Caco-2 (cell line): ENCODE measurements at regions of chr2 and their contacts with region 1.

Region 1: DNA sequence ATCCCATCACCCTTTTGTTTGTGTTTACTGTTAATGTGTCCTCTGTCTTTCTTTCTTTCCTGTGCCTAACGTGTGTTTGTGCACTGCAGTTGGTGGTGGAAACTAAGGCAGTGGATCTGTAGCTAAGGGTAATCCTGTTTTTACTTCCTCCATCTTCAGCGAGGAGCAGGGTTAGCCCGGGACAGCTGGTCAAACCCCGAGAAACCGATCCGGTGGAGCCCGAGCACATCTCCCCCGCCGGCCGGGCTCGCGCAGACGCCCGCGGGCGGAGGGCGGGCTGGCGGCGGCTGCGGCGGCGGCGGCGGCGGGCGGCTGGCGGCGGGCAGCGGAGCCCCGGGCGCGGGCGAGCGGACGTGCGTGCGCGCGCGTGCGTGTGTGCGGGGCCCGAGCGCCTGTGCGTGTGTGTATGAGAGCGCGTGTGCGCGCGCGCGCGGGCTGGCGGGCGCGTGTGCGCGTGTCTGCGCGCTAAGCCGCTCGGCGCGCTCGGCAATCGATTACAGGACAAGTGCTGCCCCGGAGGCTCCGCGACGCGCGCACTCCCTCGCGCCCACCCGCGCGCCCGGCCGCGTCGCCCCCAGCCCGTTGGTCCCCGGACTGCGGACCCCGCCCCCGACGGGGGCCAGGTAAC is at the start of gene IKZF2:
- DNase-seq: peak; percentile 86 to 88
- H3K4me3 ChIP-seq: peak within 1 kb of the TSS; percentile 70
- H3K4me3 Mint-ChIP-seq: peak within 1 kb of the TSS; percentile 97
- H3K27ac Mint-ChIP-seq: peak within 1 kb of the TSS; percentile 61
- H3K4me1 ChIP-seq: 0 out of 2 replicates have a peak, but pooled peaks cover 3% of the 10 kb centered on the region
- H3K4me1 Mint-ChIP-seq: peaks cover 19% of the 10 kb centered on the region
- H3K27me3 ChIP-seq: no peaks in the 10 kb centered on the region
- H3K27me3 Mint-ChIP-seq: no peaks in the 10 kb centered on the region
- CTCF ChIP-seq: no peak
- total RNA-seq, gene IKZF2: 13.3 and 14.2 TPM in 2 replicates

Region 2: DNA sequence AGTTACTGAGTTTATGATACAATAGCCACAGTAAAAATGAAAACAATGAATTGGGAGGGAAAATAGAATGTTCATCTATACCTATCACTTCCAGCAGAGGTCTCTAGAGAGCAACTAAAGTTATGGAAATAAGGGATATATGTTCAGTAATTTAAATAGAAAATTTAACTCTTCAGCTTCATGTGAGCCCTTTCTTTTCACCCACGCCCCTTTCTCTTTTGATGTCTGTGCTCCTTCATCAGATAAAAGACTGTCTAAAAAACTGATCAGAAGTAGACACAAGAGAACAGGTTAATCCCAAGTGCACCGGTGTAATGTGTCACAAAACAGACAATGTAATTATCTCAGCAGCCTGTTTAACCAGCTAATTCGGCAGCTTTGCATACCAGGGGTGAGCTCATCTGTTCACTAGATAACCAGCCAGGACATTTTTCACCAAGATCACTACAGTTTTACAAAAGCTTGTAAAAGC is 374.5 kb before region 1 on chr2:
- CTCF ChIA-PET with region 1: interaction called, 14 read pairs
- POLR2A ChIA-PET with region 1: no interaction called
- intact Hi-C with region 1: loop called (anchors 1 kb)
- DNase-seq: peak; percentile 42 to 59
- H3K4me3 ChIP-seq: no peak overlapping the region
- H3K4me3 Mint-ChIP-seq: peak overlapping the region; percentile 56
- H3K27ac Mint-ChIP-seq: peak overlapping the region; percentile 44
- H3K4me1 ChIP-seq: peaks cover 8% of the 10 kb centered on the region
- H3K4me1 Mint-ChIP-seq: peaks cover 15% of the 10 kb centered on the region
- H3K27me3 ChIP-seq: no peaks in the 10 kb centered on the region; the same call in 1 of the 2 replicates
- H3K27me3 Mint-ChIP-seq: no peaks in the 10 kb centered on the region
- CTCF ChIP-seq: peak; percentile 50 to 67

Region 3: GRCh38 chr2:212870574-212870973 is 281.0 kb before region 1 on chr2:
- CTCF ChIA-PET with region 1: no interaction called
- POLR2A ChIA-PET with region 1: no interaction called
- intact Hi-C with region 1: no loop called
- DNase-seq: no peak
- H3K4me3 ChIP-seq: no peak overlapping the region
- H3K4me3 Mint-ChIP-seq: no peak overlapping the region
- H3K27ac Mint-ChIP-seq: no peak overlapping the region
- H3K4me1 ChIP-seq: peaks cover 7% of the 10 kb centered on the region; the same call in 1 of the 2 replicates
- H3K4me1 Mint-ChIP-seq: no peaks in the 10 kb centered on the region
- H3K27me3 ChIP-seq: no peaks in the 10 kb centered on the region
- H3K27me3 Mint-ChIP-seq: no peaks in the 10 kb centered on the region
- CTCF ChIP-seq: no peak

Region 4: GRCh38 chr2:212905640-212906220 is 245.8 kb before region 1 on chr2:
- CTCF ChIA-PET with region 1: interaction called, 5 read pairs
- POLR2A ChIA-PET with region 1: no interaction called
- intact Hi-C with region 1: loop called (anchors 2 kb)
- DNase-seq: peak; percentile 81 to 85
- H3K4me3 ChIP-seq: no peak overlapping the region
- H3K4me3 Mint-ChIP-seq: peak overlapping the region; percentile 70
- H3K27ac Mint-ChIP-seq: peak overlapping the region; percentile 89
- H3K4me1 ChIP-seq: peaks cover 27% of the 10 kb centered on the region
- H3K4me1 Mint-ChIP-seq: peaks cover 32% of the 10 kb centered on the region
- H3K27me3 ChIP-seq: no peaks in the 10 kb centered on the region
- H3K27me3 Mint-ChIP-seq: no peaks in the 10 kb centered on the region
- CTCF ChIP-seq: no peak

Region 5: DNA sequence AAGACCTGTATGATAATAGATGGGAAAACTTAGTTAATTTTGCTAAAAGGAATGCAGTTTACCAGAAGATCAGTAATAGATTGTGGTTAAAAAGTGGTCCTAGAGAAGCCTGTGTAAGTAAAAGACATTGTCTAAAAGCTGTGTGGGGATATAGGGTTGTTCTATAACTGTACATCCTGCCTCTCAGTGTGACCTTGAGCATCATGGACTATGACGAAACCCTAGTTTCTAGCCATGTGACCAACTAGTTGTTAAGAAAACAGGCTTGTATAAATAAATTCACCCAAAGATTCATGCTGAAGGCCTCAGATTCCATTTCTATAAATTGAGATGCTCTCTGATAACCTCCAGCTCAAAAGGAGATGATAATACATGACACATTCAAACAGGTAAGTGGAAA is 160.9 kb before region 1 on chr2:
- CTCF ChIA-PET with region 1: no interaction called
- POLR2A ChIA-PET with region 1: no interaction called
- intact Hi-C with region 1: no loop called
- DNase-seq: no peak
- H3K4me3 ChIP-seq: no peak overlapping the region
- H3K4me3 Mint-ChIP-seq: no peak overlapping the region
- H3K27ac Mint-ChIP-seq: no peak overlapping the region
- H3K4me1 ChIP-seq: no peaks in the 10 kb centered on the region
- H3K4me1 Mint-ChIP-seq: no peaks in the 10 kb centered on the region
- H3K27me3 ChIP-seq: no peaks in the 10 kb centered on the region
- H3K27me3 Mint-ChIP-seq: no peaks in the 10 kb centered on the region
- CTCF ChIP-seq: no peak

Region 6: DNA sequence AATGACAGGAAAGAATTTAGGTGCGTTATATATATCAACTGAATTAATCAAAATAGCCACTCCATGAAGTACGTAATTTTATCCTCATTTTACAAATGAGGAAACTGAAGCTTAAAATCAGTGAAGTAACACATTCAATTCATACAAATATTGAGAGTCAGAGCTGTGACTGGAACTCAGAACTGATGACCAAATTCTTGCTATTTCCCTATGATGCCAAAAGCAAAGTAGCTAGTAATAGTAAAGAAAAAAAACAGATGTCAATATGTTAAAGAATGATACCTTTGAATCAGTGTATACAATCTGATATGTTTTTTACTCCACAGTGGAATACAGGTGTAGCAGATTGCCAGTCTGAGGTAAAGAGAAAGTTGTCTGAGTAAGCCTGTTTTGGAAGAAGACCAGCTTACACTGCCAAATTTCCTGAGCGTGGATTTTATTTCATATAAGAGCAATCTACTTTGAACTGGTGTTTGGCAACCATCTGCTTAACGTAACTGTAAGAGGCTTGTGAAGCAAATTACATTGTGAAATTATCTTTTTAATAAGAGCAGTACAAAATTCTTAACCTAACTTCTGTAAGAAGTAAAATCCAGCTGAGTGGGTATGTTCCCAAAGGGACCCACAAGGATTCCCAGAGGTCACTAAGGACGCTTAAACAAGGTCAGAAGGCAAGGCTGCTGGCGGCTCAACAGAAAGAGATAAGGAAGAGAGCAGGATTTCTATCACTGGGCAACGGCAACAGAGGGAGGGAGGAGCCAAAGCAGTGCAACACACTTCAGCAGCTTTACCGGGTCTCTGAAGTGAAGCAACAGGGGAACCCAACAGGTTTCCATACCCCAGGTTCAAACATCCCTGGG is 85.7 kb before region 1 on chr2:
- CTCF ChIA-PET with region 1: no interaction called
- POLR2A ChIA-PET with region 1: no interaction called
- intact Hi-C with region 1: loop called (anchors 1 kb)
- DNase-seq: peak; percentile 43 to 44
- H3K4me3 ChIP-seq: no peak overlapping the region
- H3K4me3 Mint-ChIP-seq: peak overlapping the region; percentile 46
- H3K27ac Mint-ChIP-seq: no peak overlapping the region
- H3K4me1 ChIP-seq: no peaks in the 10 kb centered on the region
- H3K4me1 Mint-ChIP-seq: peaks cover 14% of the 10 kb centered on the region
- H3K27me3 ChIP-seq: no peaks in the 10 kb centered on the region
- H3K27me3 Mint-ChIP-seq: no peaks in the 10 kb centered on the region
- CTCF ChIP-seq: no peak

Region 7: DNA sequence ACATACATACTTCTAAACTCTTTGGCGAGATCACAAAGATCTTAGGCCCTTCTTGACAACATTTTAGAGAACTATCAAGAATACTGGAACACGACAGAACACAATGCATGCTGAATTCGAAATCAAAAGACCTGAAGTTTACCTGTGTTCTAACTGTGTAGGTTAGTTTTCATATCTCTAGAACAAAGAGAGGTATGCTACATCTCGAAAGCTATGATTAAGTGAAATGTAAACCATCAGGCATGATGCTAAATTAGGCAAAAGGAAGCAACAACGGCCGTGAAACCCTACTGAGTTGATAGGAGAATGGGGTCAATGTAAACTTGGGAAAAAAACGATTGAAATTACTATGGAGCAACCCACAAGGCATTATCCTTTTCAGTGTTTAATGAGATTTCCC is 43.8 kb before region 1 on chr2:
- CTCF ChIA-PET with region 1: no interaction called
- POLR2A ChIA-PET with region 1: no interaction called
- intact Hi-C with region 1: no loop called
- DNase-seq: no peak
- H3K4me3 ChIP-seq: no peak overlapping the region
- H3K4me3 Mint-ChIP-seq: no peak overlapping the region
- H3K27ac Mint-ChIP-seq: no peak overlapping the region
- H3K4me1 ChIP-seq: peaks cover 2% of the 10 kb centered on the region; the same call in 1 of the 2 replicates
- H3K4me1 Mint-ChIP-seq: peaks cover 16% of the 10 kb centered on the region
- H3K27me3 ChIP-seq: no peaks in the 10 kb centered on the region
- H3K27me3 Mint-ChIP-seq: no peaks in the 10 kb centered on the region
- CTCF ChIP-seq: no peak

Region 8: DNA sequence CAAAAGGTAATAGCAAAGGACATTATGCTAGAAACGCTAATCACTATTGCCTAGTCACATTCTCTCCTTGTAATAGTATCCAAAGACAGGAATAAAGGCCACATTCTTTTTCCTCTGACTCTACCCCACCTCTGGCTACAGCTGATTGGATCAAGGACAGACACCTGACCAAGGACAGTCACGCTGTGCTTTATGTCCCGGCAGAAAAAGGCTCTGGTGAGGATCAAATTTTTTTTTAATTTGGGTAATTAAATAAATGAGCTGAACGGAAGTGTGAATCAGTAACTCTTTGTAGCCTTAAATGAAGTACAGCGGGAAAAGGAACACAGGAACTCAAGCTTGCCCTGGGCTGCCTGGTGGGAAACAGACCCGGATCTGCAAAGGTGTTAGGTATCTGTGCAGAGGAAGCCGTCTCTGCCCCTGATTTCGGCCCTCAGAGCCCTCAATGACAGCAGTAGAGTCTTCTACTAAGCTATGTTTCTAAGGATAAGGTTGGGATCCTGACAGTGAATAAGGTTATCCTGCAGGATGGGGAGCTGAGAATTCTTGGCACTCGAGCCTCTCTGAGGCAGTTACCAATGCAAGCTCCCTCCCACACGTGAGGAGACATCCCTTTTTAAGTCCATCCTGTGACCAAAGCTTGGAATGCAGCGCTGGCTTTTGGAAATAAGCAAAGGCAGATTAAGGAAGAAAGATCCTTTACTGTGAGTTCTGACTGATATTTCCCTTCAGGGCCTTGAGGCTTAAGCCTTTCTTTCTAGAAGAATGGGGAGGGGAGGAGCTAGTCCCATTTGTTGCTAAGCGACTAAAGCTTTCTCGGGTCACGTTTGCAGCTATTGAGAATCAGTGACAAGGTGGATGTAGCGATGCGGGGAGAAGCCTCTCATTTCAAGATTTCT is 37.7 kb after region 1 on chr2:
- CTCF ChIA-PET with region 1: no interaction called
- POLR2A ChIA-PET with region 1: no interaction called
- intact Hi-C with region 1: loop called (anchors 1 kb)
- DNase-seq: peak; percentile 50 to 65
- H3K4me3 ChIP-seq: peak overlapping the region; percentile 15
- H3K4me3 Mint-ChIP-seq: peak overlapping the region; percentile 71
- H3K27ac Mint-ChIP-seq: peak overlapping the region; percentile 85
- H3K4me1 ChIP-seq: peaks cover 32% of the 10 kb centered on the region
- H3K4me1 Mint-ChIP-seq: peaks cover 28% of the 10 kb centered on the region
- H3K27me3 ChIP-seq: no peaks in the 10 kb centered on the region
- H3K27me3 Mint-ChIP-seq: no peaks in the 10 kb centered on the region
- CTCF ChIP-seq: no peak